ENCODE measurements at regions of chr16 and their contacts with region 1.

Region 1: GRCh38 chr16:89815639-89816348 is 653 bp downstream of the FANCA start:
- DNase-seq: peak; percentile 44
- ATAC-seq: no peak
- H3K4me3 ChIP-seq: peak overlapping the region; percentile 33 to 76 (median 45)
- H3K4me3 Mint-ChIP-seq: peak overlapping the region; percentile 85
- H3K27ac ChIP-seq: no peak overlapping the region
- H3K27ac Mint-ChIP-seq: peak overlapping the region; percentile 62
- H3K4me1 ChIP-seq: peaks cover 5 to 12% of the 10 kb centered on the region in 2 donors
- H3K4me1 Mint-ChIP-seq: peaks cover 6% of the 10 kb centered on the region
- H3K27me3 ChIP-seq: peaks cover 0 to 5% (median 0%) of the 10 kb centered on the region in 4 experiments
- H3K27me3 Mint-ChIP-seq: no peaks in the 10 kb centered on the region
- CTCF ChIP-seq: no peak

Region 2: GRCh38 chr16:89115216-89115861 is 700.5 kb before region 1 on chr16:
- CTCF ChIA-PET with region 1: no interaction called
- POLR2A ChIA-PET with region 1: no interaction called
- intact Hi-C with region 1: no loop called
- DNase-seq: peak; percentile 96
- ATAC-seq: peak; percentile 84
- H3K4me3 ChIP-seq: peak overlapping the region; percentile 35 to 57 (median 51)
- H3K4me3 Mint-ChIP-seq: peak overlapping the region; percentile 88
- H3K27ac ChIP-seq: peak overlapping the region; percentile 83 to 85
- H3K27ac Mint-ChIP-seq: peak overlapping the region; percentile 99
- H3K4me1 ChIP-seq: peaks cover 42 to 44% of the 10 kb centered on the region in 2 donors
- H3K4me1 Mint-ChIP-seq: peaks cover 8% of the 10 kb centered on the region
- H3K27me3 ChIP-seq: no peaks in the 10 kb centered on the region
- H3K27me3 Mint-ChIP-seq: no peaks in the 10 kb centered on the region
- CTCF ChIP-seq: no peak

Region 3: DNA sequence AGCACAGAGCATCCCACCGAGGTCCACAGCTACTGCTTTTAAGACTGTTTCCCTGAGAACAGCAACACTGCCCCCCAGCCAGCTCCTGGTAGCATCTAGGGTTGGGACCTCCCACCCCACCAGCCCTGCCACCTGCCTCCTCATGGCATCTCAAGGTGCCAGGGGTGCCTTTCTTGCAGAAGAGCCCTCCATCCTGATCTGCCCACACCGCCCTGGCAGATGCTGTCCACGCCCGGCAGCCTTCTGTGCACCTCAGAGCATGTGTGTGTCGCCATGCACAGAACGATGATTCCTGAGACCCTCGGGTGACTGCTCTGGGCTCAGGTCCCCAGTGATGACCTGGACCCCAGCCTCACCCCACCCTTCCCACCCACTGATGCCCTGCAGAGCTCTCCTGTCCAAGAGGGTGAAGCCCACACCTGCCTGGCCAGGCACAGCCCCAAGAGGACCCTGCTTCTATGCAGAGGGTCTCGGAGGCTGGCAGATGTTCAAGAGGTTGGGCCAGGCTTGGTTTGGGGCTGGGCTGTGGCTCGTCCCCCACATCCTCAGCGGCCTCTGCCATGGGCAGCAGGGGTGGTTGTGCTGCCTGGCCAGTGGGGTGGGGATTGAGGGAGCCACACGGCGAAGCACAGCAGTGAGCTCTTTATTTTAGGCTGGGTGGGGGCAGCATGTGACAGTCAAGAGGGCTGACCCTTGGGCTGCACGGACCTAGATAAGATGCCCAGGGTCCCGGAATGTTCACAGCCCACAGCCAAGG is 109.1 kb before region 1 on chr16:
- CTCF ChIA-PET with region 1: interaction called, 5 read pairs
- POLR2A ChIA-PET with region 1: no interaction called
- intact Hi-C with region 1: loop called (anchors 1 kb)
- DNase-seq: no peak
- ATAC-seq: no peak
- H3K4me3 ChIP-seq: no peak overlapping the region
- H3K4me3 Mint-ChIP-seq: no peak overlapping the region
- H3K27ac ChIP-seq: no peak overlapping the region
- H3K27ac Mint-ChIP-seq: no peak overlapping the region
- H3K4me1 ChIP-seq: peaks cover 8 to 14% of the 10 kb centered on the region in 2 donors
- H3K4me1 Mint-ChIP-seq: peaks cover 9% of the 10 kb centered on the region
- H3K27me3 ChIP-seq: no peaks in the 10 kb centered on the region
- H3K27me3 Mint-ChIP-seq: no peaks in the 10 kb centered on the region
- CTCF ChIP-seq: no peak

Region 4: DNA sequence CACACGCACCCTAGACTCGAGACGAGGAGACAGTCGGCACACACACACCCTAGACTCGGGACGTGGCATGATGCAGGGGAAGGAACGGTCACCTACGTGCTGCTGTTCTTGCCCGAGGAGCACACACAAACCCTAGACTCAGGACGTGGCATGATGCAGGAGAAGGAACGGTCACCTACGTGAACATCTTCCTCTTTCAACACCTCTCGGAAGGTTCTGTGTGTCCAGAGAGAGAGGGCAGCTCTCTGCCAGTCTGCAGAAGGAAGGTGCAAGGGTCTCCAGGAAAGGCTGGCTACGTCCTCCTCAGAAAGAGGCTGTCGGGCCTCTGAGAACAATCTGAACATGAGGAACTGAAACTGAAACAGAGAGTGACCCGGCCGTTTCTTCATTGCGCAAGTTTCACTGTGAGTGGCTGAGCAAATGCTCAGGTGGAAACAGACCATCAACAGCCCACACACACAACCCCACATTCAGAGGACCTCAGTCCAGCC is 51.0 kb before region 1 on chr16:
- CTCF ChIA-PET with region 1: no interaction called
- POLR2A ChIA-PET with region 1: interaction called, 3 read pairs
- intact Hi-C with region 1: loop called (anchors 2 kb)
- DNase-seq: peak; percentile 89
- ATAC-seq: peak; percentile 88
- H3K4me3 ChIP-seq: peak overlapping the region; percentile 35 to 76 (median 56)
- H3K4me3 Mint-ChIP-seq: peak overlapping the region; percentile 95
- H3K27ac ChIP-seq: peak overlapping the region; percentile 67 to 86
- H3K27ac Mint-ChIP-seq: peak overlapping the region; percentile 97
- H3K4me1 ChIP-seq: peaks cover 37 to 52% of the 10 kb centered on the region in 2 donors
- H3K4me1 Mint-ChIP-seq: peaks cover 51% of the 10 kb centered on the region
- H3K27me3 ChIP-seq: no peaks in the 10 kb centered on the region
- H3K27me3 Mint-ChIP-seq: no peaks in the 10 kb centered on the region
- CTCF ChIP-seq: no peak

Region 5: GRCh38 chr16:89842471-89843408 is 26.9 kb after region 1 on chr16:
- CTCF ChIA-PET with region 1: no interaction called
- POLR2A ChIA-PET with region 1: no interaction called
- intact Hi-C with region 1: loop called (anchors 1 kb)
- DNase-seq: no peak
- ATAC-seq: no peak
- H3K4me3 ChIP-seq: no peak overlapping the region
- H3K4me3 Mint-ChIP-seq: no peak overlapping the region
- H3K27ac ChIP-seq: no peak overlapping the region
- H3K27ac Mint-ChIP-seq: peak overlapping the region; percentile 2
- H3K4me1 ChIP-seq: peaks cover 11 to 20% of the 10 kb centered on the region in 2 donors
- H3K4me1 Mint-ChIP-seq: peaks cover 22% of the 10 kb centered on the region
- H3K27me3 ChIP-seq: no peaks in the 10 kb centered on the region
- H3K27me3 Mint-ChIP-seq: no peaks in the 10 kb centered on the region
- CTCF ChIP-seq: no peak

Region 6: DNA sequence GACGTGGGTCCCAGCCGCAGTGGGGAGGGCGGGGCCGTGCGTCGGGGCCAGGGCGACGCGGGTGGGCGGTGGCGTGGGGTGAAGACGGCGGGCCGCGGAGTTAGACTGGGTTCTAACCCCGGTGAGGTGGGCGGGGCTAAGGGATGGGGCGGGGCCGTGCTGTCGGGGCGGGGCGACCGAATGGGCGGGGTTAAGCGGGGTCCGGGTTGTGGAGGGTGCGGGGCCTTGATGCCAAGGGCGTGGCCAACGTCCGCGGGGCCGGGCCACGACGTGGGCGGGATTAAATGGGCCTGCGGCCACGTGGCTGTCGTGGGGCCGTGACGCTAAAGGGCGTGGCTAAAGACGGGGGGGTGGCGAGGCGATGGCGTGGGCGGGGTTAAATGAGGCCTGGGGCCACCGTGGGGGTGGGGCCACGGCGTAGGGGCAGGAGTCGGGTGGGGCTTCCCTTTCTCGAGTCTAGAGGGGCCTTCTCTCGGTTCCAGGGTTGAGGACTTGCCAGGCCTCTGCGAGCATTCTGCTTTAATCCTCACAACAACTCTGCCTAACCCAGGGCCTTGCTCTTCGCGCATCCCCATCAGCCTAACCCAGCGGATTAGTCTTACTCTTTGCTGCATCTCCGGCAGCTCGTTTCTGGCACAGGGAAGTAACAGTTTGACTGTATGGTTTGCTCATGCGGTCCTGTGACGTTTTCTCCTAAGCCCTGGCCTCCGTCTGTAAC is 58.3 kb after region 1 on chr16:
- CTCF ChIA-PET with region 1: no interaction called
- POLR2A ChIA-PET with region 1: no interaction called
- intact Hi-C with region 1: loop called (anchors 1 kb)
- DNase-seq: peak; percentile 99
- ATAC-seq: peak; percentile 82
- H3K4me3 ChIP-seq: peak overlapping the region in 4 of 5 experiments; percentile 92 to 99 (median 97)
- H3K4me3 Mint-ChIP-seq: peak overlapping the region; percentile 95
- H3K27ac ChIP-seq: peak overlapping the region; percentile 100
- H3K27ac Mint-ChIP-seq: peak overlapping the region; percentile 99
- H3K4me1 ChIP-seq: peaks cover 14 to 19% of the 10 kb centered on the region in 2 donors
- H3K4me1 Mint-ChIP-seq: peaks cover 16% of the 10 kb centered on the region
- H3K27me3 ChIP-seq: no peaks in the 10 kb centered on the region
- H3K27me3 Mint-ChIP-seq: no peaks in the 10 kb centered on the region
- CTCF ChIP-seq: no peak

Region 7: GRCh38 chr16:90008708-90009535 is 193.1 kb after region 1 on chr16:
- CTCF ChIA-PET with region 1: no interaction called
- POLR2A ChIA-PET with region 1: no interaction called
- intact Hi-C with region 1: no loop called
- DNase-seq: peak; percentile 90
- ATAC-seq: peak; percentile 90
- H3K4me3 ChIP-seq: peak overlapping the region in 4 of 5 experiments; percentile 26 to 51 (median 38)
- H3K4me3 Mint-ChIP-seq: peak overlapping the region; percentile 80
- H3K27ac ChIP-seq: peak overlapping the region; percentile 70 to 76
- H3K27ac Mint-ChIP-seq: peak overlapping the region; percentile 92
- H3K4me1 ChIP-seq: peaks cover 54 to 68% of the 10 kb centered on the region in 2 donors
- H3K4me1 Mint-ChIP-seq: peaks cover 56% of the 10 kb centered on the region
- H3K27me3 ChIP-seq: no peaks in the 10 kb centered on the region
- H3K27me3 Mint-ChIP-seq: no peaks in the 10 kb centered on the region
- CTCF ChIP-seq: no peak